ENCODE measurements at regions of chr1 and their contacts with region 1.

Region 1: GRCh38 chr1:174769961-174770549 is 229.7 kb upstream of the CACYBP start:
- DNase-seq: no peak
- ATAC-seq: peak; percentile 71
- H3K4me3 ChIP-seq: no peak overlapping the region
- H3K27ac ChIP-seq: no peak overlapping the region
- H3K4me1 ChIP-seq: no peaks in the 10 kb centered on the region
- H3K27me3 ChIP-seq: no peaks in the 10 kb centered on the region
- CTCF ChIP-seq: peak; percentile 79

Region 2: DNA sequence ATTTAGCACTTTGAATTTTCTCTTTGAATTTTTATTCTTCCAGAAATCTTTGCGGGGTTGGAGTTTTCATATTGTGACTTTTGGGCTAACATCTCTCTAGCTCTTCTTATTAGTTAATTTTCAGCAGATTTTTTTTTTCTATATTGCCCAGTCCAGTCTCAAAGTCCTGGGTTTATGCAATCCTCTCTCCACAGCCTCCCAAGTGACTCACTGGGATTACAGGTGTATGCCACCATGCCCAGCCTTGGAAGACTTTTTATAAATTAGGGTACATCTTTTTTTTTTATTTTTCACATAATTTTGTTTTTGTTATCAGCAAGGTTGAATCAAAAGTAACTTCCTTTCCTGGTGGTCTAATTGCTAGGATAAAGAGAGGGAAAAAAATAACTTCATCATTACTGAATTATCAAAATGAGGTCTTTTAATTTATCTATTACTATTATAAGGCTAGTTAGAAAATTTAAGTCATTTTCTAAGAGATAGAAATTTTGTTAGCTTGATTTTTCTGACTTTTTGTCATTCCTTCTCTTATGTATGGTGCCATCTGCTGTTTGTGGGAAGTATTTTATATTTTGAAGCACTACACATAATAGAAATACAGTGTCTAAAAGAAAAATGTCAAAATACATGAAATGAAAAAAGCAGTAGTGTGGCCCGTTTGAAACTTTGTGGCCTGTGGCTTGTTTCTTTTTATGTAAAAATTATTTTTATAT is 43.7 kb before region 1 on chr1:
- intact Hi-C with region 1: no loop called
- DNase-seq: no peak
- ATAC-seq: no peak
- H3K4me3 ChIP-seq: no peak overlapping the region
- H3K27ac ChIP-seq: no peak overlapping the region
- H3K4me1 ChIP-seq: no peaks in the 10 kb centered on the region
- H3K27me3 ChIP-seq: no peaks in the 10 kb centered on the region
- CTCF ChIP-seq: peak; percentile 50

Region 3: GRCh38 chr1:174968750-174969244 is 198.7 kb after region 1 on chr1:
- intact Hi-C with region 1: loop called (anchors 10 kb)
- DNase-seq: no peak
- ATAC-seq: peak; percentile 34
- H3K4me3 ChIP-seq: no peak overlapping the region
- H3K27ac ChIP-seq: peak overlapping the region; percentile 84
- H3K4me1 ChIP-seq: peaks cover 61% of the 10 kb centered on the region
- H3K27me3 ChIP-seq: no peaks in the 10 kb centered on the region
- CTCF ChIP-seq: no peak

Region 4: DNA sequence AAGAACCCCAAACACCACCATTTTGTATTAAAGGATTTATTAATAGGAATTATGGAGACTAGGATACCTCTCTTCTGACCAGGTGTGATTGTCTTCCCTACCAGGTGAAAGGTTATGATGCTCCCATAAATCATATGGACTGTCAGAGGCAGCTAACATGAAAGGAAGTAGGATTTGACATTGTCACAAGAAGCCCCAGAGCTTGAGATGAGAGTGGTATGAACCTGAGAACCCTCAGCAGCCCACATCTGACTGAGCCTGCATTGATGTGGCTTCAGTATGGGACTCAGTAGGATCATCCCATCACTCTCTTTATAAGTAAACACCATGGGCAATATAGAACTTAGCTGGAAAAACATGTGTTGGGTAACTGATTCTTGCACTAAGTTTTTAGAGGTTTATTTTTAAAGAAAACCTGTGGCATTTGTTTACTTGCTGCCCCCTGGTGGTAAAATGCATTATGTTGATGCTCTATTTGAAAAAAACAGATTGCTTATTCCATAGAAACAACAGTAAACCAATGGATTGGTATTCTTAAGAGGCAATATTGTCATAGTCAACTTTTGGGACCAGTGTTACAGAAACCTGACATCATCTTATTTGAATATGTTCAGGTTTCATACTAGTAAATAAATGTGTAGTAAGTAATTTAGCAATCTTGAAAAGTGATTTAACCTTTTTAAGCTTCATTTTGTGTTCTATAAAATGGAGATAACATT is 213.1 kb after region 1 on chr1:
- intact Hi-C with region 1: loop called (anchors 10 kb)
- DNase-seq: no peak
- ATAC-seq: peak; percentile 19
- H3K4me3 ChIP-seq: no peak overlapping the region
- H3K27ac ChIP-seq: no peak overlapping the region
- H3K4me1 ChIP-seq: no peaks in the 10 kb centered on the region
- H3K27me3 ChIP-seq: no peaks in the 10 kb centered on the region
- CTCF ChIP-seq: peak; percentile 77